ENCODE measurements at regions of chr13 and their contacts with region 1.

Region 1: GRCh38 chr13:26557393-26558023 is at the start of gene WASF3:
- DNase-seq: peak; percentile 95
- H3K4me3 ChIP-seq: peak within 1 kb of the TSS; percentile 84 to 94 (median 85)
- H3K27ac ChIP-seq: peak within 1 kb of the TSS; percentile 20
- H3K4me1 ChIP-seq: peaks cover 29% of the 10 kb centered on the region
- H3K27me3 ChIP-seq: peaks cover 0 to 18% of the 10 kb centered on the region in 2 experiments
- CTCF ChIP-seq: no peak
- POLR2A ChIP-seq: peak; percentile 73
- total RNA-seq, gene WASF3: 29.7 and 32.4 TPM in 2 replicates

Region 2: DNA sequence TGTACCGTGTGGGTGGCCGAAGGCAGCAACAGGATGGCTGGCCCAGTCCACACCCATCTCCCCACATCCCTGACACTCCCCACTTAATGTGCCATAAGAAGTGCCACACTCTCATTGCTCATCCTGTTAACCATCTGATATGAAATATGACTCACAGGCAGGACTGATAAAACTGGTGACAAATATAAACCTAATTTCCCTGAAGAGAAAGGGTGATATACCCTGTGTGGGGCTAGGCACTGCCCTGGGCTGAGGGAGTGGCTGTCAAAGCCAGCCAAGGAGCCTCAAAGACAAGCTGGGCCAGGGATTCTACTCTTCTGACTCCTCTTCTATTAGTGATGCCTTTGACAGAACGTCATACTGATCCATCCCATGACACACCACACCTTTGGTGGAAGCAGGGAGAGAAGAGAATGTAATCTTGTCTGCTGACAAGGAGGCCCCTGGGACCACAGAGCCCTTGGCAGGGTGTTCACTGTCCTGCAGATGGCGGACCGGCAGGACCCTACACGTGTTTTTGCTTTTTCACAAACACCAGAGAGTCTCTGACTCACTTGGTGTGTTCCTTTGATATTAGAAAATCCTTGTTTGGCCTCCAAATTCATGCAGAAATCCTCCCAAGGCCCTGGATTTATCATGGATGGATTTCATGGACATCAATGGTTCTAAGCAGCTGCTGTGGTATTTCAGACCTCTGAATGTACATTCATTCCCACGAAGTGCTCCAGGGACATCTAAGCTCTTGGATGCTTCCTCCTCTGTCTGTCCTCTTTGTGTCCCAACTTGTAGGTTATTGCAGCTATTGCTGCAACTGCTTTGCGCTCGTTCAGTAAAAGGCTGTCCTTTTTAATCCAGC is 98.0 kb before region 1 on chr13:
- CTCF ChIA-PET with region 1: no interaction called
- POLR2A ChIA-PET with region 1: no interaction called
- dilution Hi-C with region 1: no loop called
- intact Hi-C with region 1: no loop called
- DNase-seq: no peak
- H3K4me3 ChIP-seq: no peak overlapping the region
- H3K27ac ChIP-seq: no peak overlapping the region
- H3K4me1 ChIP-seq: no peaks in the 10 kb centered on the region
- H3K27me3 ChIP-seq: no peaks in the 10 kb centered on the region
- CTCF ChIP-seq: no peak
- POLR2A ChIP-seq: no peak

Region 3: DNA sequence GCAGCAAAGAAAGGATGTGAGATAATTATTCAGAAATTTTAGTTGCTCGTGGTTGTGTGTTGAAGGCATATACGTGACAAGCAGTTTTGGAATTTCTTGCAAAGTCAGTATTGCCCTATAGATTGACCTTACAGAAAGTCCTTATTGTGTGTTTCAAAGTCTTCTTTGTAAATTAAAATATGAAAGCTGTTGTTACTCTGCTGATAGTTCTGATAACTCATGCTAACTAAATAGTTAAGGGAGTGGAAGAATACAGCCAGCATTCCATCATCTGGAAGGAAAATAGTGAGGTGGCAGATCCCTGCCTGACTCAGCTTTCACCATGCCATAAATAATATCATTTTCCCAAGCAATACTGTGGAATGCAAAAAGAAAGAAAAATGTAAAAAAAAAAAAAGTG is 27.2 kb after region 1 on chr13:
- CTCF ChIA-PET with region 1: interaction called, 9 read pairs
- POLR2A ChIA-PET with region 1: interaction called, 4 read pairs
- dilution Hi-C with region 1: no loop called
- intact Hi-C with region 1: loop called (anchors 1 kb)
- DNase-seq: peak; percentile 96
- H3K4me3 ChIP-seq: peak overlapping the region in 1 of 3 experiments; percentile 3
- H3K27ac ChIP-seq: peak overlapping the region; percentile 82
- H3K4me1 ChIP-seq: peaks cover 68% of the 10 kb centered on the region
- H3K27me3 ChIP-seq: no peaks in the 10 kb centered on the region
- CTCF ChIP-seq: no peak
- POLR2A ChIP-seq: no peak

Region 4: GRCh38 chr13:26589754-26590153 is 32.2 kb after region 1 on chr13:
- CTCF ChIA-PET with region 1: interaction called, 9 read pairs
- POLR2A ChIA-PET with region 1: interaction called, 4 read pairs
- dilution Hi-C with region 1: no loop called
- intact Hi-C with region 1: loop called (anchors 1 kb)
- DNase-seq: peak; percentile 96
- H3K4me3 ChIP-seq: peak overlapping the region in 2 of 3 experiments; percentile 26 to 52
- H3K27ac ChIP-seq: peak overlapping the region; percentile 87
- H3K4me1 ChIP-seq: peaks cover 70% of the 10 kb centered on the region
- H3K27me3 ChIP-seq: no peaks in the 10 kb centered on the region
- CTCF ChIP-seq: no peak
- POLR2A ChIP-seq: no peak

Region 5: GRCh38 chr13:26628706-26629105 is 71.2 kb after region 1 on chr13:
- CTCF ChIA-PET with region 1: interaction called, 14 read pairs
- POLR2A ChIA-PET with region 1: no interaction called
- dilution Hi-C with region 1: no loop called
- intact Hi-C with region 1: no loop called
- DNase-seq: peak; percentile 38
- H3K4me3 ChIP-seq: no peak overlapping the region
- H3K27ac ChIP-seq: no peak overlapping the region
- H3K4me1 ChIP-seq: no peaks in the 10 kb centered on the region
- H3K27me3 ChIP-seq: no peaks in the 10 kb centered on the region
- CTCF ChIP-seq: peak; percentile 16 to 26
- POLR2A ChIP-seq: no peak

Region 6: DNA sequence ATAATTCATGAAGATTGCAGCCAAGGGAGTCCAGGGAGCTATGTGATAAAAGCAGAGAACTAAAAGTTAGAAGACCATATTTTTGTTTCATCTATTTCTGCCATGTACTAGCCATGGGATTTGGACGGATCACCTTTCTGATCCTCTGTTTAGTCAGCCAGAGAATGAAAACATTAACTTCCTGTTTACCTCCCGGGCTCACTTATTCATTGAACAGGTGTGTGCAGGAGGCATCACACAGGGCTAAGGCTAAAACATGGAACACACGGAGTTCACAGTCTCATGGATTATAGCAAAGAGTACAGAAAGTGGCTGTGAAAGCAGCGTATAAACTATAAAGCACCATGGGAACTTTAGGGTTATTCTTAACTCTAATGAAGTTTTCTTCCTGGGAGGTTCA is 106.3 kb after region 1 on chr13:
- CTCF ChIA-PET with region 1: no interaction called
- POLR2A ChIA-PET with region 1: no interaction called
- dilution Hi-C with region 1: no loop called
- intact Hi-C with region 1: loop called (anchors 5 kb)
- DNase-seq: peak; percentile 60
- H3K4me3 ChIP-seq: no peak overlapping the region
- H3K27ac ChIP-seq: no peak overlapping the region
- H3K4me1 ChIP-seq: peaks cover 10% of the 10 kb centered on the region
- H3K27me3 ChIP-seq: no peaks in the 10 kb centered on the region
- CTCF ChIP-seq: no peak
- POLR2A ChIP-seq: no peak

Region 7: DNA sequence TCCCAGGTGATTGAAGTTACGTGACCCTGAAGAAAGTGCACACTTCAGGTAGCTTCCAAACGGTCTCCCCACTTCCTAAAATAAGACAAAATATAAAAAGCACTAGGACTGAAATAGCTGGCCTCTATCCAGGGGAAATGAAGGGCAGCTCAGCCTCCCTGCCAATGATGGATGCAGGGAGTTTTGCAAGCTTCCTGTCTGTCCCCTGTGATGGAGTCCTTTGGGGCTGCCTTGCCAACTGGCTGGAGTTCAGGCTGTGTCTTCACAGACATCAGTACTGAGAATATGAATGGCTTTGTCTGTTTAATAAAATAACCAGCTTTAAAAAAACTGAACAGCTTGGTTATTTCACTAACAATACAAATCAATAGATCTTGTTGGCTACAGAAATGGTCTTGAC is 304.4 kb after region 1 on chr13:
- CTCF ChIA-PET with region 1: no interaction called
- POLR2A ChIA-PET with region 1: no interaction called
- dilution Hi-C with region 1: no loop called
- intact Hi-C with region 1: no loop called
- DNase-seq: no peak
- H3K4me3 ChIP-seq: no peak overlapping the region
- H3K27ac ChIP-seq: no peak overlapping the region
- H3K4me1 ChIP-seq: no peaks in the 10 kb centered on the region
- H3K27me3 ChIP-seq: no peaks in the 10 kb centered on the region
- CTCF ChIP-seq: no peak
- POLR2A ChIP-seq: no peak